Activated B cell treated with CpG ODN at 0.5 μM for 24 hours (primary cell): ENCODE measurements at regions of chr1 and their contacts with region 1.

Region 1: DNA sequence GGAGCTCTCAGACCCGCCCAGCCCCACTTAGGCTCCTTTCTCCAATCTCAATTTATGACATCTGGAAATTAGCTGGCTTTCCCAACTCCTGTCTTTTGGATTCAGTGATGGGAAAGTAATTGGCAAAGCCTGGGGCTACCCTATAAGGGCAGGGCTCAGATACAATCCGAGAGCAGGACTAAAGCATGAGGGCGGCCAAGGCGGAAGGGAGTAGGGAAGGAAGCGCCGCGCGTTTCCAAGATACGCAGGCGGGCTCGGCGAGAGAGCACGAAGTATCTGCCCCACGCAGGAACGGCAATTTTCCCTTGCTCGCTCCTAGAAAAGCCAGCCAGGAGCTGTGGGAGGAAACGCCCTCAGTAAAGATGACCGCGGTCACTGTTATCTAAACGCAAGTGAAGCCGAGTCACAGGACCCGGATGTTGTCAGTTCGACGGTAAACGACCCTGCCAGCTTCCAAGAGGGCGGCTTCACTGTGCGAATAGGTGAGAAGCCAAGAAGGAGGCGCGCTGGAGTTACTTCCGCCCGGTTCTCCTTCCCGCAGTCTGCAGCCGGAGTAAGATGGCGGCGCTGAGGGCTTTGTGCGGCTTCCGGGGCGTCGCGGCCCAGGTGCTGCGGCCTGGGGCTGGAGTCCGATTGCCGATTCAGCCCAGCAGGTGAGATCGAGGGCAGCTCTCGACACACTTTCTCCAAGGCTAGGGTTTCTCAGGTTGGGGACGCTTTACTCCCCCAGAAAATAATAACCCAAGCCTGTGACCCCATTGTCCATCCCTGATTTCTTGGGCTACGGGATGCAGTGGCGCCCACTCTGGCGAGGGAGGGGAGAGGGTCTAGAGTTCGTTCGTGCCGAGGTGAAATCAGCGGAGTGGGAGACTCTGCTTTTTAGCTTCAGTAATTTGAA is at the start of gene NDUFS2:
- DNase-seq: peak; percentile 82
- ATAC-seq: peak; percentile 99
- H3K4me3 Mint-ChIP-seq: peak within 1 kb of the TSS; percentile 94
- H3K27ac Mint-ChIP-seq: peak within 1 kb of the TSS; percentile 94
- H3K4me1 Mint-ChIP-seq: peaks cover 38% of the 10 kb centered on the region
- H3K27me3 Mint-ChIP-seq: no peaks in the 10 kb centered on the region
- CTCF ChIP-seq: no peak
- total RNA-seq, gene NDUFS2: 69.1 and 73.9 TPM in 2 replicates

Region 2: DNA sequence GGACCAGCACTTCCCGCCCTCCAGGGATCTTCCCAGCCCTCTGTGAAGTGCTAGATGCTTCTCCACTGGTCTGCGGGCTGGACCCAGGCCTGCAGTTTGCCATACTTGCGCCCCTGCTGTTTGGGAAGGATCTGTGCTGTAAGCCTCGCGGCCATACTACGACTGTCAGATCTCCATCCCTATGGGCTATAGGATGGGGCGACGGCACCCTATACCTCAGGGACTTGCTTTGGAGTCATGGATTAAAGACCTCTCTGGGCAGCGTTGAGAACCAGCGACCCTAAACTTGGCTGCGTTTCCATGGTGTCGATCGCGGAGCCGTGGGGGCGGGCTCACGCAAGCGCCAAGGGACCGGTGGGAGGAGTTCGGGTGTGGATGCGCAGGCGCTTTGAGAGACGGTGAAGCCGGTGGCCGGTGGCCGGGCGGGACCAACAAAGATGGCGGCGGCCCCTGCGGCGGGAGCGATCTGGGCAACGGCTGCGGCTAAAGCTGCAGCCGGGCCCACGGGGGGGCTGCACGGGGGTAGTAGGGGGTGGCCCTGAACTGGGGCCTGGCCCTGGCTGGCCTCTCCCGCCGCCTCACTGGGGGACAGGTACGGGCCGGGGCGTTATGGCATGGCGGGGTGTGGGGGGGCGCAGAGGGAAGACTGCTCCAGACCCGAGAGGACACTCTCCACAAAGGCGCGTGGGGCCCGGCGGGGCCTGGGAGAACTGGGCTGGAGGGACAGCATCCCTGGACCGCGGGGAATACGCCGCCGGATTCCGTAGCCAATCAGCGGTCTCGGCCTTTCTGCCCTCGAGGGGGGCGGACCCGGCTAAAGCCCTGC is 42.8 kb before region 1 on chr1 and contains the start of gene USP21:
- CTCF ChIA-PET with region 1: no interaction called
- POLR2A ChIA-PET with region 1: interaction called, 13 read pairs
- intact Hi-C with region 1: no loop called
- DNase-seq: peak; percentile 93
- ATAC-seq: peak; percentile 95
- H3K4me3 Mint-ChIP-seq: peak within 1 kb of the TSS; percentile 93
- H3K27ac Mint-ChIP-seq: peak within 1 kb of the TSS; percentile 91
- H3K4me1 Mint-ChIP-seq: peaks cover 48% of the 10 kb centered on the region
- H3K27me3 Mint-ChIP-seq: no peaks in the 10 kb centered on the region
- CTCF ChIP-seq: no peak
- total RNA-seq, gene USP21: 31.9 and 38.1 TPM in 2 replicates

Region 3: DNA sequence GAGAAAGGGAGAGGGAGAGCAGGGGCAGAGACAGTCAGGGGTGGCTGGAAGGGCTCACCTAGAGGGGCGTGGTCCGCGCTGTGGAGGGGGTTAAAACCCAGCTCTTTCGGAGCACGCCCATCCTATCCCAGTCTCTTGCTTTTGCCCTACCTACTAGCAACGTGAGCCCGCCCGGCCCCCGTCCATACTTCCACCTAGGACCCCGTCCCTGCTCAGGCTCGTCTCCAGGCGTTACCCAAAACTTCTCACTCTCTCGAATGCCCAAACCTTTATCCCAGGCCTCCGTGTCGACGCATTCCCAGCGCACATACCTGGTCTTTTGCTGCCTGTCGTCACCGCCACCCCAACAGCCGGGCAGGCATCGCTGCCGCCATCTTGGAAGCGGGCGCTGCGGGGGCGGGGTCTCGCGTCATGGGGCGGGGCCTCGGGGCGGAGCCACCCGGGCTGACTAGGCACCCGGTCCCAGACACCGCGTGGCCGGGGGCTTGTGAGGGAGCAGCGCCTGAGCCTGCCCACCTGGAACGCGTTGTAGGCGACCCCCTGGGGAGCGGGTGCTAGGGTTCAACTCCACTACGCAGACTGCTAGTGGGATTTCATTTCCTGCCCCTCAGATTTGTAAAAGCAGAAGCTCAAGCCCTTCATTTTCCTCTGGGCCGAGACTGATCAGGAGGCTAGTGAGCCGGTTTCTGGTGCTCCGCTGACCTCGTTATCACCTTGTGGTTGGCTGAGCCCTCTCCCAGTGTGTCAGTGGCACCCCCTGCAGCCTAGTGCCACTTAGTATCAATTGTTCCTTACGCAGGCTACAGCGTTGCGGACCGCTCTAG is 24.8 kb before region 1 on chr1 and contains the start of gene B4GALT3:
- CTCF ChIA-PET with region 1: interaction called, 6 read pairs
- POLR2A ChIA-PET with region 1: interaction called, 26 read pairs
- intact Hi-C with region 1: no loop called
- DNase-seq: peak; percentile 99
- ATAC-seq: peak; percentile 90
- H3K4me3 Mint-ChIP-seq: peak within 1 kb of the TSS; percentile 99
- H3K27ac Mint-ChIP-seq: peak within 1 kb of the TSS; percentile 99
- H3K4me1 Mint-ChIP-seq: peaks cover 64% of the 10 kb centered on the region
- H3K27me3 Mint-ChIP-seq: no peaks in the 10 kb centered on the region
- CTCF ChIP-seq: no peak
- total RNA-seq, gene B4GALT3: 40.7 and 41.7 TPM in 2 replicates

Region 4: GRCh38 chr1:161282991-161283390 is 80.9 kb after region 1 on chr1:
- CTCF ChIA-PET with region 1: no interaction called
- POLR2A ChIA-PET with region 1: no interaction called
- intact Hi-C with region 1: no loop called
- DNase-seq: no peak
- ATAC-seq: no peak
- H3K4me3 Mint-ChIP-seq: no peak overlapping the region
- H3K27ac Mint-ChIP-seq: no peak overlapping the region
- H3K4me1 Mint-ChIP-seq: peaks cover 7% of the 10 kb centered on the region
- H3K27me3 Mint-ChIP-seq: peaks cover 3% of the 10 kb centered on the region
- CTCF ChIP-seq: no peak

Region 5: DNA sequence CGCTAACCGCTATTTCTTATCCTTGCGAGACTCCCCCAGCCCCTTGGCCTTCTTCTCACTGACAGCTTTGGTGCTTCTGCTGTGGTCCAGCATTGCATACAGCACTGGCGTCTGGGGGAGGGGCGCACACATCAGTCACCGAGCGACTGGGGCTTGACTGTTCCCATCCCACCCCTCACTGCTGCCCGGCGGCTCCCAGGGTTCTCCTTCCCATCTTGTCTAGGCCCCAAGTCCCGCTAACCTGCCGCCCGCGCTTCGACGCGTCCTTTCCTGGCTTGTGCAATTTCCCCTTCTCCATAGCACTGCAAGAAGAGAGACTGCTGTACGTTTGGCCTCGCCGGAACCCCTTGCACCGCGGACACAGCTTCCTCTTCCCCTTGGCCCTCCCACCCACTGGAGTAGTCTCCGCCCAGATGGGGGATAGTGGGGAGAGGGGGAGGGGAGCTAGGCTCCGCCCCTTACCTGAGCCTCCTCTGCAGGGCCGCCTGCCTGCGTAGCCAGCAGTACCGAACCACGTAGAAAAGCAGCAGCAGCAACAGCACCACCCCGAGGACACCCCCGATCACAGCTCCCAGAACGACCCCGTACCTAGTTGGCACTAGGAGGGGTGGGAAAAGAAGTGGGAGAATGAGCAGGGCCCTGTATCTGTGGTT is 103.9 kb after region 1 on chr1:
- CTCF ChIA-PET with region 1: no interaction called
- POLR2A ChIA-PET with region 1: interaction called, 13 read pairs
- intact Hi-C with region 1: loop called (anchors 1 kb)
- DNase-seq: peak; percentile 78
- ATAC-seq: peak; percentile 94
- H3K4me3 Mint-ChIP-seq: peak overlapping the region; percentile 99
- H3K27ac Mint-ChIP-seq: peak overlapping the region; percentile 93
- H3K4me1 Mint-ChIP-seq: peaks cover 44% of the 10 kb centered on the region
- H3K27me3 Mint-ChIP-seq: no peaks in the 10 kb centered on the region
- CTCF ChIP-seq: no peak

Region 6: DNA sequence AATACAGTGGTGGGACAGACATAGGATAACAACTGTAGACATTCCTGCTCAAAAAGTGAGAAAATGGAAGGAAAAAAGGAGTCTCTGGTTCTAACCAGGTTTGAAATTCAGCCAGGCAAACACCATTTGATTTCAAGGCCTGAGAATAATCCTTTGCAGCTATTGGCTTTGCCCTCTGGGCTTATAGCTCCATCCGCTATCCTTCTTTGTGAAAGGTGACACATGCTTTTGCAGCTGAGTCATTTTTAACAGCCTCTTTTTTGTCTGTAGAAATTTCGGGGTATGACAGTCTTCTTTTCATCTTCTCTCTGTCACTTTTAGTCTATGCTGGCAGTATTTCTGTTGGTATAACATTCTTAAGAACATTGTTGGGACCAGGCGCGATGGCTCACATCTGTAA is 128.3 kb after region 1 on chr1:
- CTCF ChIA-PET with region 1: no interaction called
- POLR2A ChIA-PET with region 1: interaction called, 13 read pairs
- intact Hi-C with region 1: no loop called
- DNase-seq: no peak
- ATAC-seq: no peak
- H3K4me3 Mint-ChIP-seq: no peak overlapping the region
- H3K27ac Mint-ChIP-seq: no peak overlapping the region
- H3K4me1 Mint-ChIP-seq: no peaks in the 10 kb centered on the region
- H3K27me3 Mint-ChIP-seq: no peaks in the 10 kb centered on the region
- CTCF ChIP-seq: no peak